Natural killer cell (primary cell): ENCODE measurements at regions of chr16 and their contacts with region 1.

Region 1: DNA sequence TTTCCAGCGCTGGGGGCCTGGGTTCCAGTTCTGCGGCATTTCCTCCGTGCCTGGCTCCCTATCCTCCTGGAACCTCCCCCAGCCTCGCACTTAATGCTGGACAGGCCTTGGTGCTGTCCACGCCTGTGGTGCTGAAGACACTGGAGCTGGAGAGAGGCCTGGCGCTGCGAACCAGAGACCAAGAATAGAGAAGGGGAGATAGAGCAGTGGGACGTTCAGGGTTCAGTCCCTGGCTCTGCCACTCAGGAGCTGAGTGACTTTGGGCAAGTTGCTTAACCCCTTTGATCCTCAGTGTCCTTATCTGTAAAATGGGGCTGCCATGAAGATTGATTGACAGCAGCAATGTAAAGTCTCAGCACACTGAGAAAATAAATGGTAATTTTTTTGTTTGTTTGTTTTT is 11.9 kb downstream of the SBK1 start:
- DNase-seq: peak in 1 of 2 donors; percentile 39
- ATAC-seq: peak in 2 of 3 donors; percentile 62 to 78
- H3K4me3 ChIP-seq: no peak overlapping the region
- H3K4me3 Mint-ChIP-seq: no peak overlapping the region
- H3K27ac ChIP-seq: no peak overlapping the region
- H3K27ac Mint-ChIP-seq: peak overlapping the region in 1 of 2 donors; percentile 81
- H3K4me1 ChIP-seq: peaks cover 39% of the 10 kb centered on the region
- H3K4me1 Mint-ChIP-seq: peaks cover 70 to 77% of the 10 kb centered on the region in 2 donors
- H3K27me3 ChIP-seq: no peaks in the 10 kb centered on the region
- H3K27me3 Mint-ChIP-seq: no peaks in the 10 kb centered on the region
- CTCF ChIP-seq: no peak

Region 2: DNA sequence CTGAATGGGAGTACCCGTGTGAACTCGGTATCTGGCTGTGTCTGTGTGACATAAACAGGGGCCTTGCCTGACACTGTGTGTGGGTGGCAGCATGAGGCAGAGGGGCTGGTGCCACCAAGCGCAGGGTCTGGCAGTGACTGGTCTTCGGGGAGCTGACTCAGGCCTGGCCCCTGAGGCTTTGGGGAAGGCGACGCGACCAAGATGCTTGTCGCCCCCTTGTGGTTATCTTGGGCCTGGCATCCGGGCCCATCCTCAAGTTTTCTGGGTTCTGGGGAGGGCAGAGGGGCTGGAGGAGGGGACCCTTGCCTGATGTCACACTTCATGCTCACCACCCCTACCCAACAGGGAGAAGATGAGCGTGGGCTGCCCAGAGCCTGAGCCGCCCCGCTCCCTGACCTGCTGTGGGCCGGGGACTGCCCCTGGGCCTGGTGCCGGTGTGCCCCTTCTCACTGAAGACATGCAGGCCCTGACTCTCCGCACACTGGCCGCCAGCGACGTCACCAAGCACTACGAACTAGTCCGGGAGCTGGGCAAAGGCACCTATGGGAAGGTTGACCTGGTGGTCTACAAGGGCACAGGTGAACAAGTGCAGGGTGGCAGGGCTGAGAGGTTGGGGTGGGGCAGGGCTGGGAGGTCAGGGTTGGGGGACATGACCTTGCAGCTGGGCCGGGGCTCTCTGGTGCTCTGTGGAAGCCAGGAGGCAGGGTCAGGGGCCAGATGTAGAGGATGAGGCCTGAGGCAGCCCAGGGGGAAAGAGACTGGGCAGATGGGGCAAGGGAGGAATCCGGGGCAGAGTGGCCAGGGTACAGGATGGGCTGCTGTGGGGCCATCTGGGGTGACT is 13.0 kb after region 1 on chr16:
- intact Hi-C with region 1: loop called (anchors 2 kb)
- DNase-seq: peak; percentile 73 to 86
- ATAC-seq: peak; percentile 75 to 94 (median 84)
- H3K4me3 ChIP-seq: no peak overlapping the region
- H3K4me3 Mint-ChIP-seq: peak overlapping the region; percentile 35
- H3K27ac ChIP-seq: peak overlapping the region; percentile 10
- H3K27ac Mint-ChIP-seq: peak overlapping the region; percentile 39 to 91
- H3K4me1 ChIP-seq: peaks cover 58% of the 10 kb centered on the region
- H3K4me1 Mint-ChIP-seq: peaks cover 20 to 42% of the 10 kb centered on the region in 2 donors
- H3K27me3 ChIP-seq: no peaks in the 10 kb centered on the region
- H3K27me3 Mint-ChIP-seq: no peaks in the 10 kb centered on the region
- CTCF ChIP-seq: peak; percentile 92

Region 3: GRCh38 chr16:28491970-28492474 is 187.8 kb after region 1 on chr16 and contains the start of gene CLN3:
- intact Hi-C with region 1: loop called (anchors 10 kb)
- DNase-seq: peak; percentile 84 to 94
- ATAC-seq: peak; percentile 58 to 82 (median 69)
- H3K4me3 ChIP-seq: peak within 1 kb of the TSS; percentile 83
- H3K4me3 Mint-ChIP-seq: peak within 1 kb of the TSS; percentile 99
- H3K27ac ChIP-seq: peak within 1 kb of the TSS; percentile 96
- H3K27ac Mint-ChIP-seq: peak within 1 kb of the TSS; percentile 98 to 100
- H3K4me1 ChIP-seq: peaks cover 80% of the 10 kb centered on the region
- H3K4me1 Mint-ChIP-seq: peaks cover 45 to 74% of the 10 kb centered on the region in 2 donors
- H3K27me3 ChIP-seq: no peaks in the 10 kb centered on the region
- H3K27me3 Mint-ChIP-seq: no peaks in the 10 kb centered on the region
- CTCF ChIP-seq: no peak
- total RNA-seq, gene CLN3: 71.1 to 85.3 (median 84.7) TPM